Activated B cell treated with CpG ODN at 0.5 μM for 24 hours (primary cell): ENCODE measurements at regions of chr19 and their contacts with region 1.

Region 1: GRCh38 chr19:28905996-28906395 is 307.0 kb downstream of the UQCRFS1 start:
- DNase-seq: no peak
- ATAC-seq: no peak
- H3K4me3 Mint-ChIP-seq: no peak overlapping the region
- H3K27ac Mint-ChIP-seq: no peak overlapping the region
- H3K4me1 Mint-ChIP-seq: no peaks in the 10 kb centered on the region
- H3K27me3 Mint-ChIP-seq: no peaks in the 10 kb centered on the region
- CTCF ChIP-seq: no peak

Region 2: DNA sequence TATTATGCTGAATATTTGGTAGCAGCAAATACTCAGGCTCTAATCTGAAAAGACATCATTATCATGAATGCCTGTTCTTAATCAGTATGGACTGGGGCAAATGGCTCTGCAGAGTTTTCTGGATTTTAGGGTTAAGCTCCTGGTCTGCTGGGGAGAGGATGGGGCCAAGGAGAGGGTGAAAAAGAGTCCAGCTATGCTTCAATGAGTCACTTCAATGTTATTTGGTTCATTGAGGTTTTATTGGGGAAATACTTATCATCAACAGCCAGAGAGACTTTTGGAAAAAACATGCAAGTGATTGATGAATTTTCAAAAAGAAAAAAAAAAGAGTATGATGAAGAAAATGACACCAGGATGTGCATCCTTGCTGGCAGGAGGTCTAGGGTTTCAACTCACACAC is 28.6 kb after region 1 on chr19:
- CTCF ChIA-PET with region 1: no interaction called
- POLR2A ChIA-PET with region 1: no interaction called
- intact Hi-C with region 1: loop called (anchors 1 kb)
- DNase-seq: no peak
- ATAC-seq: no peak
- H3K4me3 Mint-ChIP-seq: no peak overlapping the region
- H3K27ac Mint-ChIP-seq: no peak overlapping the region
- H3K4me1 Mint-ChIP-seq: no peaks in the 10 kb centered on the region
- H3K27me3 Mint-ChIP-seq: no peaks in the 10 kb centered on the region
- CTCF ChIP-seq: no peak

Region 3: DNA sequence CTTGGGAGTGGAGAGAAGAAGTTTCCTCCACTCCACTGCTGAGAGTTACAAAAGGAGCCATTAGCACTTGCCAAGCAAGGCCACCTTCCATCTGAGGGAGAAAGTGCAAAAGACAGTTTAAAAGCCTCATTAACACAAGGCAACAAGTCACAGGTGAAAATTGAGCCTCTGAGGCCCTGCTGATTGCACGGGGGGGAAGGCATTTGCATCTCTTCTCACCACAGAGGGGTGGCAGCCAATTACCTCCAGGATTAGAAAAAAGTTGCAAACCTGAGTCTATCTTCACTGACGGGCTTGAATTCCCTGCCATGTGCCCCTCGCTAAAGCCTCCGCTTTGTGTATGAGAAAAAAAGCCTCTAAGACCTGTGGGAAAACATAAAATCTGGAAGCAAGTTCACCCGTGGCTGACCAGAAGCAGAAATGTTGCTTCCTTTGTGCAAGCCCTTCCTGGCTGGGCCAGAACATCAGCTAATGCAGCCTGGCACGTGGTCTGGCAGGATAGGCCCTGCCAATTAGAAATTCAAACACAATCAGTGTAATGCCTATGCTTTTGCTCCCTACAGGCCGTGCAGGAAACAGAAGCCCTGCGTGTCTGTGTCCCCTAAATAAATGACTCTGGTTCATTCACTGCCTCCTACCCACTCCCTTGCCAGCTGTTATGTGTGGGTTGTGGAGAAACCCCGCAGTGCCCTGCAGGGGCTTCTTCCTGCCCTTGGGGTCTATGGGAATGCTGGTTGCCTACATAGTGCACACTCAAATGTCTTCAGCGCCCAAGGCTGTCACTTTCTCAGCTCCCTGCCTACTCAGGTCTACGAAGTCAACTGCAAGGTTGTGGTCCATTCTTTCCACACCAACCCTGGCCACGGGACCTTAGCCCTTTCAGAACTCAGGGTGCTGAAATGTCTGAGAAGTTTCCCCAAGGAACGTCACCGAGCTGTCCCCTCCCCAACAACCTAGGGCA is 156.8 kb after region 1 on chr19:
- CTCF ChIA-PET with region 1: no interaction called
- POLR2A ChIA-PET with region 1: no interaction called
- intact Hi-C with region 1: no loop called
- DNase-seq: no peak
- ATAC-seq: no peak
- H3K4me3 Mint-ChIP-seq: no peak overlapping the region
- H3K27ac Mint-ChIP-seq: no peak overlapping the region
- H3K4me1 Mint-ChIP-seq: no peaks in the 10 kb centered on the region
- H3K27me3 Mint-ChIP-seq: no peaks in the 10 kb centered on the region
- CTCF ChIP-seq: no peak